ENCODE measurements at regions of chr16 and their contacts with region 1.

Region 1: DNA sequence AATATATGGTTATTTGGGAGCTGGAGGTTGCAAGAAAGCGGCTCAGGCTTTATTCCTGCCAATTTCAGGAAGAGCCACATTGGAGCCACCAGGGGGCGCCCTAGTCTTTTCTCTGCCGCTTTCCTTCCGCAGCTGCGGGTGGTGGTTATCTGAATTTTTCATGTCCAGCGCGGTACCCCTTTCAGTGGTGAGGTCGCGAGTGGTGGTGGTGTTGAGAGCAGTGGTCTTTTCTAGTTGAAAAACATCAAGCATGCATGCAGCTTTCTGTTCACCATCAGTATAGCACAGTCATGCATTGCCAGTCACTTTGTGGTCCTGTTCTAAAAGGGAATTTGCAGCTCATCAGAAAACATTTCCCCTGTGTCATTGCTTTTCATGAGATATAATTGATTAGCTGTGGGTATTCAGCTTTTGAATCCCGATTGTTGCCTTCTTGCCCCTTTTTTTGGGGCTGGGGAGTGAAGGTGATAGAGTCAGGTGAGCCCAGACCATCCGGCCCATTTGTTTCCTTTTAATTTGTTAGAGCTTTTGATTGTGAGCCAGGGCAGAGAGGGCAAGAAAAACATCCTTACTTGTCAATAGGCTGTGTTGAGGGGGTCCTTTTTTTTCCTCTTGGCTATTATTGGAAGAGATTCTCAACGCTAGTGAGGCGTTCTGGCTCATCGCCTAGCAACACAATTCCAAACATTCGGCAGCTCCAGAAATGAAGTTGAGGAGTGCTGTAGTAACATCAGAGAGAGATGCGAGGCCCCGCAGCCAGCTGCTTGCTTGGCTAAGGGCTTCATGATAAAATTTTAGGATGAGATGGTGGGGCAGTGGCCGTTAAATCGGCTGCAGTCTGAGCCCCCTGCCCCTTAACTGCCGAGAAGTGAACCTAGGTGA is 119.0 kb downstream of the SNX29 start:
- DNase-seq: no peak
- ATAC-seq: peak; percentile 62

Region 2: GRCh38 chr16:11892761-11893160 is 202.8 kb before region 1 on chr16:
- intact Hi-C with region 1: no loop called
- DNase-seq: no peak
- ATAC-seq: no peak

Region 3: GRCh38 chr16:12170091-12171040 is 74.8 kb after region 1 on chr16:
- intact Hi-C with region 1: loop called (anchors 5 kb)
- DNase-seq: no peak
- ATAC-seq: peak; percentile 38

Region 4: DNA sequence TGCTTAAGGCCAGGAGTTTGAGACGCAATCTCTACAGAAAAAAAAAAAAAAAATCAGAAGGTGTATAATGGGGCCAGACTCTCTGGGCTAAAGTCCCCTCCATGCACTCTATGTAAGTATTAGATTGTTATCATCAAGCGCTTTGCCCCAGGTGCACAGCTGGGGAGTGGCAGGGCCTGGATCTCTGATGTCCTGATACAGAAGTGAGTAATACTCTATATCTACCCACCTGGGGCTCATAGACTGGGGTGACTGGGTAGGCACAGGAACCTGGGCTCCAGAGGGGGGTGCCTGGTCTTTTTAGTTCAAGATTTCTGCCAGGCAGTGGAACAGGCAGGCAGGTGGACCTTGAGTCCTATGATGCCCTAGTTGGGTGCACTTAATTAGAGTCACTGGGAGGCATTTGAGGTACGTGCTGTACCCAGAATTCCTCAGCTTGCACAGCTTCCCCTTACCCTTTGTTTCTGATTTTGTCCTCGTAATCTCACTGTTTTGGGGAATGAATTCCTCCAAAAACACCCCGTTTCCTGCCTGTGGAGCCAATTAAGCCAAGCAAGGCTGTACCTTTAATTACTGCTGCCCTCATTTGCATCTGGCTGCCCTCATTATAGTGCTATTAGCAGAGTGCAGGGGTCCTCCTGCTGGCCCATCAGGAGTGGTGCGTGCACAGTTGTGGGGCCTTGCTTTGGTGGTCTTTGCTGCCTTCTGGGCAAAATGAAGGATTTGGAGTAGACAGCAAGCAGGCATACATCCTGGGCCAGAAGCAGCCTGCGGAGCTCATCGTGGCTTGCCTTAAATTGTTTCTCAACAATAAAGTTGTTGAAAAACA is 120.0 kb after region 1 on chr16:
- intact Hi-C with region 1: loop called (anchors 5 kb)
- DNase-seq: no peak
- ATAC-seq: no peak

Region 5: GRCh38 chr16:12340151-12340733 is 244.7 kb after region 1 on chr16:
- intact Hi-C with region 1: loop called (anchors 1 kb)
- DNase-seq: no peak
- ATAC-seq: no peak

Region 6: GRCh38 chr16:12455287-12455798 is 359.8 kb after region 1 on chr16:
- intact Hi-C with region 1: loop called (anchors 10 kb)
- DNase-seq: peak; percentile 90
- ATAC-seq: peak; percentile 74

Measured in Right ventricle myocardium inferior (tissue), 1 donor.